ENCODE measurements at regions of chr10 and their contacts with region 1.

Region 1: GRCh38 chr10:5948999-5949759 is 28.2 kb downstream of the IL15RA start:
- DNase-seq: peak; percentile 75
- H3K4me3 ChIP-seq: no peak overlapping the region
- H3K27ac ChIP-seq: no peak overlapping the region
- H3K4me1 ChIP-seq: peaks cover 13% of the 10 kb centered on the region
- H3K27me3 ChIP-seq: no peaks in the 10 kb centered on the region
- CTCF ChIP-seq: peak; percentile 67

Region 2: DNA sequence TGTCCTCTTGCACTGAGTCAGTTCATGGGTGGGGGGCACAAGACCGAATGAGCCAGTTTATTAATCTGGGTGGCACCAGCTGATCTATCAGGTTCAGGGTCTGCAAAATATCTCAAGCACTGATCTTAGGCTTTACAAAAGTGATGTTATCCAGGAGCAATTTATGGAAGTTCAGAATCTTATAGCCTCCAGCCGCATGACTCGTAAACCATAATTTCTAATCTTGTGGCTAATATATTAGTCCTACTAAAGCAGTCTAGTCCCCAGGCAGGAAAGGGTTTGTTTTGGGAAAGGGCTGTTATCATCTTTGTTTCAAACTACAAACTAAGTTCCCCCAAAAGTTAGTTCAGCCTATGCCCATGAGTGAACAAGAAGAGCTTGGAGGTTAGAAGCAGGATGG is 798.1 kb before region 1 on chr10:
- CTCF ChIA-PET with region 1: no interaction called
- POLR2A ChIA-PET with region 1: no interaction called
- intact Hi-C with region 1: no loop called
- DNase-seq: no peak
- H3K4me3 ChIP-seq: no peak overlapping the region
- H3K27ac ChIP-seq: no peak overlapping the region
- H3K4me1 ChIP-seq: no peaks in the 10 kb centered on the region
- H3K27me3 ChIP-seq: no peaks in the 10 kb centered on the region
- CTCF ChIP-seq: no peak

Region 3: DNA sequence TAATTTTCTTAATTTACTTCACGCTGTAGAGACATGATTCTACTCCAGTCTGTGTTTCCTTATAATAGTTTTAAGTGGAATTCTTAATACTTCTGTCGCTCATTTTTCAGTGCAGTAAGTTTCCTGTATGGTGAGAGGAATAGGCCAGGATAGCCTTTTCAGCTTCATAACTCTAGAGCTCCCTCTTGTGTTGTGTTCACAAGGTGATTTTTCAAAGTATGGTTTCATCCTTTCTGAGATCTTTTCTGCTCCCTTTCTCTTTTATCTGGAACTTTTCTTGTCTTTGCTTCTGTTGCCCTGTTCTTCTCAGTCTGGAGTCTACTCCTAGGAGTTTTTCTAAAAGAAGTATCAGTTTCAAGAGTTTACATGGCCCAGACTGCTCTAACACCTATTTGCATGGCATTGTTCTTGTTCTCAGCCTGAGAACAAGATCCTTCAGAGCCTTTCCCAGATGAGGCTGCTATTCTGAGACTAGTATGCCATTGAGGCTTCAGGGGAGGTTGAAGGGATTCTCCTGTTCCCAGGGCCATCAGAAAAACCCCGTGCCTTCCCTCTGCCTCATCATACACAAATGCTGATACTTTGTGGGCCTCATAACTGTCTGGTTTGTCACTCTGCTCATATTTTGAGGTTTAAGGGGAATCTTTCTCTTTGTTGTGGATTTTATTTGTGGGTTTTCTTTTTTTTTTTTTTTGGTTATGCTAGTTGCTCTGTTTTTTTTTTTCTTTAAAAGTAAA is 515.0 kb before region 1 on chr10:
- CTCF ChIA-PET with region 1: interaction called, 11 read pairs
- POLR2A ChIA-PET with region 1: no interaction called
- intact Hi-C with region 1: no loop called
- DNase-seq: peak; percentile 63
- H3K4me3 ChIP-seq: no peak overlapping the region
- H3K27ac ChIP-seq: peak overlapping the region; percentile 33
- H3K4me1 ChIP-seq: peaks cover 4% of the 10 kb centered on the region
- H3K27me3 ChIP-seq: no peaks in the 10 kb centered on the region
- CTCF ChIP-seq: peak; percentile 75

Region 4: DNA sequence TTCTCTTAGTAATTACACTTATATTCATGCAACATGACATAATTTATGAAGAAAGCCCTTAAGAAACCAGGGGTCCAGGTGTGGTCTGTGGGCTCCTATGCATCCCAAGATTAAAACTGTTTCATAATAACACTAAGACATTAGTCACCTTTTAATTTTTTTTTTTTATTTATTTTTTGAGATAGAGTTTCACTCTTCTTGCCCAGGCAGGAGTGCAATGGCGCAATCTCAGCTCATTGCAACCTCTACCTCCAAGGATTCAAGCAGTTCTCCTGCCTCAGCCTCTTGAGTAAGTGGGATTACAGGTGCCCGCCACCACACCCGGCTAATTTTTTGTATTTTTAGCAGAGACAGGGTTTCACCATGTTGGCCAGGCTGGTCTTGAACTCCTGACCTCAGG is 148.4 kb before region 1 on chr10:
- CTCF ChIA-PET with region 1: no interaction called
- POLR2A ChIA-PET with region 1: no interaction called
- intact Hi-C with region 1: no loop called
- DNase-seq: no peak
- H3K4me3 ChIP-seq: no peak overlapping the region
- H3K27ac ChIP-seq: peak overlapping the region; percentile 16
- H3K4me1 ChIP-seq: no peaks in the 10 kb centered on the region
- H3K27me3 ChIP-seq: no peaks in the 10 kb centered on the region
- CTCF ChIP-seq: no peak

Region 5: DNA sequence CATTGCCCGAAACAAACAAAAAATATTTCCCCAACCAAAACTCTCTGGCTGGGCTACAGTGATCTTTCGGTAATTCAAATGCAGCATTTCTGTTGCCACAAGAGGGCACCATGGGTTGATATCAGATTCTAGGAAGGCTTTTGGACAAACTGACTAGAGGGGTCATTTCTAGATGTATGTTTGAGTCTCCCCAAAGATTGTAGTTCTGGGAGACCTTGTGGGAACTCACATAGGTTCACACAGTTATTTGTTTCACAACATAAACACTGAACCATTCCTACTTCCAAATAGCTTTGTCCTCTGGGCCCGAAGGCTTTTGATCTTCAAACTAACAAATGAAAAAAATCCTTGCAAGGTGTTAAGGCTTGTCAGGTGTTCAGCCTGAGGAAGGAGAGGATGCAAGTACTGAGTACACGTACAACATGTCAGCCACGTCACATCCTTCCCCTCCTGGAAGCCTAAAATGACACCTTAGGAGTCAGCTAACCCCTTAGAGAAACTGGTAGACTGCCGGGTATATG is 65.1 kb after region 1 on chr10:
- CTCF ChIA-PET with region 1: no interaction called
- POLR2A ChIA-PET with region 1: no interaction called
- intact Hi-C with region 1: loop called (anchors 5 kb)
- DNase-seq: peak; percentile 57
- H3K4me3 ChIP-seq: no peak overlapping the region
- H3K27ac ChIP-seq: no peak overlapping the region
- H3K4me1 ChIP-seq: no peaks in the 10 kb centered on the region
- H3K27me3 ChIP-seq: no peaks in the 10 kb centered on the region
- CTCF ChIP-seq: peak; percentile 84

Region 6: DNA sequence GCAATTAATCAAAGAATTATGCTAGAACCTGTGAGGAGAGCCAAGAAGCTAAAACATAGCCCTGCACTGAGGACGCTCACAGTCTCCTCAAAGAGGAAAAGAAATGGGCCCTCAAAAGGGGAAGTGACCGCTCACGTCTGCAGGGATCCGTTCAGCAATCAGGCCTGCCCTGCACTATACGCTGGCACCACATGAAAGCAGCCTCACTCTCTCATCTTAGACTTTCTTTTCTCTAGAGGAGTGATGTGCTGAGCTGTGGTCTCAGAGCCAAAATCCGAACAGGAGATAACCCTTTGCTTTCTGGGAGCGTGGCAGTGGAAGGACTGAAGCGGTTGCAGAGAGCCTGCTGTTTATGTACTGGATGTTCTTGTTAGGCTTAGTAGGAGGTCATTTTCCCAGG is 119.2 kb after region 1 on chr10:
- CTCF ChIA-PET with region 1: interaction called, 10 read pairs
- POLR2A ChIA-PET with region 1: no interaction called
- intact Hi-C with region 1: no loop called
- DNase-seq: no peak
- H3K4me3 ChIP-seq: no peak overlapping the region
- H3K27ac ChIP-seq: no peak overlapping the region
- H3K4me1 ChIP-seq: no peaks in the 10 kb centered on the region
- H3K27me3 ChIP-seq: peaks cover 32% of the 10 kb centered on the region
- CTCF ChIP-seq: no peak

Region 7: GRCh38 chr10:6088721-6089390 is 139.7 kb after region 1 on chr10 and contains the start of gene RBM17:
- CTCF ChIA-PET with region 1: no interaction called
- POLR2A ChIA-PET with region 1: no interaction called
- intact Hi-C with region 1: loop called (anchors 5 kb)
- DNase-seq: peak; percentile 98
- H3K4me3 ChIP-seq: peak within 1 kb of the TSS; percentile 87
- H3K27ac ChIP-seq: peak within 1 kb of the TSS; percentile 95
- H3K4me1 ChIP-seq: peaks cover 25% of the 10 kb centered on the region
- H3K27me3 ChIP-seq: no peaks in the 10 kb centered on the region
- CTCF ChIP-seq: peak; percentile 100
- total RNA-seq, gene RBM17: 195 and 200 TPM in 2 replicates

Measured in A673 (cell line).